BJ (cell line): ENCODE measurements at regions of chr3 and their contacts with region 1.

Region 1: DNA sequence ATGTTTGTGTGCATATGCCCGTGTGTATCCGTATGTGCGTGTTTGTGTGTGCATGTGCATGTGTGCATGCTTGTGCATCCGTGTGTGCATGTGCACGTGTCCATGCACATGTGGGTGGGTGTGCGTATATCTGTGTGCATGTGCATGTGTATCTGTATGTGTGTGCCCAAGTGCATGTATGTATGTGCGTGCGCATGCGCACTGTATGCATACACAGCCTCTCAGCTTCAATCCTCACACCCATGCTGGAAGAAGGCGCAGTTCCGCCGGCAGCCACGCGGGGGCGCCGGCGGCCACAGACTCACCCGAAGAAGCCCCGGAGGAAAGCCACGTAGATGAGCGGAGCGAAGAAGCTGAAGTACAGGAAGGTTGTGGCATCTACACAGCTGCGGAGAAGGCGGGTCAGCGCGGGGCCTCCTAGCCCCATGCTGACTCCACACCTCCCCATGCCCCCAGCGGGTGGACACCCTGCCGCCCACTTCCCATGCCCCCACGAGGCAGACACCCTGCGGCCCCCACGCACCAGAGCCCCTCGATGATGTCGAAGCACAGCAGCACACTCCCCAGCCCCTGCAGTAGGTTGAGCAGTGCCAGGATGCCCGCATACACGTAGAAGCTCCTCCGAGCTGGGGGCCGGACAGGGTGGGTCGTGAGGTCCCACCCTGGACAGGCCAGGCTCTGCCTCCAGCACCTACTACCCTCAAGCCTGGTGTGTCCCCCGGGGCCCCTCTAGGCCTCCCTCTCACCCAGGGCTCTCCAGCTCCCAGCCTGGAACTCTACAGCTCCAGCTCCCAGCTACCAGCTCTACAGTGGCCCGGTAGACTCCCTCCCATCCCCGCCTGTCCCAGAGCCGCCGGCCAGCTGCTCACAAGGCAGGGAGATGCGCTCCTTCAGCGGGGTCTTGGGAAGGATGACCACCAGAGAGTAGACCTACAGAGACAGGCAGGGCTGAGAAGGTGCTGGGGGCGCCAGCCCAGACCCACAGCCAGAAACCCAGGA is 15.4 kb downstream of the TPRA1 start:
- DNase-seq: peak; percentile 66
- H3K4me3 ChIP-seq: no peak overlapping the region
- H3K27me3 ChIP-seq: no peaks in the 10 kb centered on the region
- CTCF ChIP-seq: peak; percentile 100

Region 2: DNA sequence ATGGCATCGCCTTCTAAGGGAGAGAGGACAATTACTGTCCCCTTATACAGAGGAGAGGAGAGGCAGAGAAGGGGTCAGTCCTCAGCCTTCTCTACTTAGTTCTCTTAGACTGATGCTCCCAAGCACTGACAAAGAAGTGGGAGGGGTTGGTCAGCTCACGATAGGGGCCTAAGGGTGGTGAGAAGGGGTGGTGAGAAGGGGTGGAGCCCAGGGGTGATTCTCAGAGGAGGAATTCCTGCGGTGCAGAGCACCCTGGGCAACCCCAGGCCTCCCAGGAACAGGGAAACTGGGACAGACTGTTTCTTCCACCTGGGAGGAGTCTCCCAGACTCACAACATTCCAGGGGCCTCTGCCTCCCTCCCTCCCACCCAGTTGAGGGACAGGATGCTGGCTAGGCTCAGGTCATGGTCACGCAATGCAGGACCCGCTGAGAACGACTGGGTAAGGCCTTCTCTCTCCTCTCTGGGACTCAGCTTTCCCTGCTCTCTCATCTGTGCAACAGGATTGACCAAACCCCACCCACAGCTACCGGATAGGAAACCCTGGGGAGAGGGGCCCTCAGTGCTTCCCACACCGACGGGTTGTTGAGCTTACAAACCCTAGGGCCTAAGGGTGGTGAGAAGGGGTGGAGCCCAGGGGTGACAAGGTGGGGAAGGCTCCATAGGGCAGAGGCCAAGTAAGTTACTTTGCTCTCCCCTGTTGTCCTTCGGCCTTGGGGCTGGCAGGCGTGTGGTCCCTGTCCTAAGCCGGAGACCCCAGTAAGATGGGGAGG is 13.8 kb after region 1 on chr3:
- CTCF ChIA-PET with region 1: interaction called, 40 read pairs
- POLR2A ChIA-PET with region 1: no interaction called
- DNase-seq: peak; percentile 47
- H3K4me3 ChIP-seq: peak overlapping the region; percentile 72
- H3K27me3 ChIP-seq: no peaks in the 10 kb centered on the region
- CTCF ChIP-seq: no peak

Region 3: GRCh38 chr3:127959846-127960245 is 384.7 kb after region 1 on chr3:
- CTCF ChIA-PET with region 1: interaction called, 12 read pairs
- POLR2A ChIA-PET with region 1: interaction called, 4 read pairs
- DNase-seq: no peak
- H3K4me3 ChIP-seq: no peak overlapping the region
- H3K27me3 ChIP-seq: no peaks in the 10 kb centered on the region; the same call in 1 of the 2 replicates
- CTCF ChIP-seq: peak; percentile 35; the same call in 1 of the 2 replicates